Activated CD8-positive, alpha-beta T cell treated with anti-CD3 and anti-CD28 coated beads, Interleukin-2, amount 10 ng/mL, durations not matched to agents 7 days and 5 days (primary cell): ENCODE measurements at regions of chr14 and their contacts with region 1.

Region 1: DNA sequence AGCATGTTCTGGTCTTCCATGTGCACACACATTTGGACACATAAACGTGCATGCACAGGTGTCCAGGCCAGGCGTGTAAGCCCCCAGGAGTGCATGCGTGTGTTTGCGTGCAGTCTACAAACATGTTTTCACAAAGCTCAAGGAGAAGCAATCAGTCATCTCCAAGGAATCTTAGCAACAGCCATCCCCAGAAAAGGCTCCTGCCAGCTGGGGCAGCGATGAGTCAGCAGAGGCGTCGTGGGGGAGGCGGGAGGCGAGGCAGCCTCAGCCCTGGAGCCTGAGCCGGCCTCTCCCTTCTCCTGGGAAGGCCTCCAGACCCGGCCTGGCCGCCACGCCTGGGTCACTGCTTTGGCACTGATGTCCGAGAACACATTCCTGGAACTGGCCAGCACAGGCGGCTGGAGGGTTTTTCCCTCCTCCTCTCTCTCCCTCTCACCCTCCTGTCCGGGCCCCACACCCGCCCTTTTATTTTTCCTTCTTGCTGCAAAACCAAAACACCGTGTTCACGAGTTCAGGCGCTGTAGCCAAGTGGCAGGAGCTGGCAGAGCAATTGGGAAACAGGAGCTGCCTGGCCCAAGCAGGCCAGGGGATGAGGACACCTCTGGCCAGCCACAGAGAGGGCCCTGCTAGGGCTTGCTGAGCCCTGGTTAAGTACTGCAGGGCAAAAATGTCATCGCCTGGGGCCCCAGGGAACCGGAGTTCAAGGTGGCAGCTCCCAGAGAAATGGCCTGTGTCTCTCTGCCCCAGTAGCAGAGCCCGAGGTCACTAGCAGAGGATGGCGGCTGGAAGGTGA is 92.7 kb downstream of the LRRC74A start:
- DNase-seq: no peak
- ATAC-seq: no peak
- H3K4me3 Mint-ChIP-seq: no peak overlapping the region
- H3K27ac Mint-ChIP-seq: peak overlapping the region; percentile 81
- H3K4me1 Mint-ChIP-seq: peaks cover 72% of the 10 kb centered on the region
- H3K27me3 Mint-ChIP-seq: no peaks in the 10 kb centered on the region

Region 2: DNA sequence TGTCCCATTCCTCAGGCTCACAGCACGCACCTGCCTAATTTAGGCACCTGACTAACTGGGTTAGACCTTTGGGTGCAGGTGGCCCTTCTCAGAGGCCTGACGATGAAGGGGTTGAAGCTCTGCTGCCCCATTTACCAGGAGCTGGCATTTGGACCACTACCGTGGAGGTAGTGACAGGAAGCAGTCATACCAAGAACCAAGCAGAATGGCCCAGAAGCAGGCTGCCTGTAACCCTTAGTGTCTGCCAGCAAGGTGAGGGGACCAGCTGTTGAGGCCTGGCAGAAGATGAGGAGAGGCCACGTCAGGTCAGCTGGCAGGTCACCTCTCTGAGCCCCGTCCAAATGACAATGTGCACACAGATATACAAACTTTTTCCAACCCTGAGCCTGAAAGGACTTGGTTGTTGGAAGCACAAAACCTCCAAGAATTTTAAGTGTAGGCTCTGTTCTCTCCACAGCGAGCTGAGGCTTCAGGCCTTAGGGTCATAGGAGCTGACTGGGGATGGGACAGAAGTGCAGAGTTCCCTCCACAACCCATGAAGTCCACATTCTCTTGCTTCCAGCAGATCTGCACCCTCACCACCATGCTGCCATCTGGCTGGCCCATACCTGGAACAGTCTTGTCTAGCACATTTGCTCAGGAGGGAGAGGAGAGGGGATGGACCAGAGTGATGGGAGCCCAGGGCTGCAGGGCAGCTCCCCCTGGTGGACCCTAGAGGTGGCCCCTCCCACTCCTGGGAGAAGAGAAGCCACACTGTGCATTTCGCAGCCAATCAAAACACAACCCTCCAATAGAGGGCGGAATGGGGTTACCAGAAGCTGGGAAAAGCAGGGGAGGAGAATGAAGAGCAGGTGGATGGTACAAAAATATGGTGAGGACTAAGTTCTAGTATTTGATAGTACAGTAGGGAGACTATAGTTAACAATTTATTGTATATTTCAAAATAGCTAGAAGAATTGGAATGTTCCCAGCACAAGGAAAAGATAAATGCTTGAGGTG is 134.4 kb before region 1 on chr14:
- CTCF ChIA-PET with region 1: no interaction called
- POLR2A ChIA-PET with region 1: no interaction called
- DNase-seq: peak; percentile 68
- ATAC-seq: peak; percentile 81
- H3K4me3 Mint-ChIP-seq: no peak overlapping the region
- H3K27ac Mint-ChIP-seq: peak overlapping the region; percentile 12
- H3K4me1 Mint-ChIP-seq: peaks cover 50% of the 10 kb centered on the region
- H3K27me3 Mint-ChIP-seq: no peaks in the 10 kb centered on the region

Region 3: DNA sequence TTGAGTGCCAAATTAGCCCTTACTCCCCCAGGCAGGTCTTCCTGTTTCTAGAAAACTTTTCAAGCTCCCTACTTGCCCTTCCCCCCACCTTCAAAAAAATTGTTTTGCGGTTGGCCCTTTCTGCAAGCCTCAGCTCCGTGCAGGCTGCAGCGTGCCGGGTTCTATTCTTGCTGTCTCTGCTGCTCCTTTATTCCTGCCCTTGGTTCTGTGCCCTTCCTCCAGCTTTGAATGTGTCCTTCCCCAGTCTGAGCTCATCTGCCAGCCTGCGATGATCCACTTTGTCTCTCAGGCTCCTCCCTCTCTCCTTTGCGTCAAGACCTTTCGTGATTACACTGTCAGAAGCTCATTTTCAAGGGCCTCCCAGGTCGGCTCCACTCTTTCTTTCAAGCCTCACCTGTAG is 11.0 kb after region 1 on chr14:
- CTCF ChIA-PET with region 1: interaction called, 28 read pairs
- POLR2A ChIA-PET with region 1: interaction called, 6 read pairs
- DNase-seq: peak; percentile 82
- ATAC-seq: peak; percentile 70
- H3K4me3 Mint-ChIP-seq: peak overlapping the region; percentile 48
- H3K27ac Mint-ChIP-seq: peak overlapping the region; percentile 82
- H3K4me1 Mint-ChIP-seq: peaks cover 79% of the 10 kb centered on the region
- H3K27me3 Mint-ChIP-seq: no peaks in the 10 kb centered on the region

Region 4: GRCh38 chr14:76947078-76947837 is 28.3 kb after region 1 on chr14:
- CTCF ChIA-PET with region 1: interaction called, 23 read pairs
- POLR2A ChIA-PET with region 1: no interaction called
- DNase-seq: peak; percentile 86
- ATAC-seq: peak; percentile 95
- H3K4me3 Mint-ChIP-seq: peak overlapping the region; percentile 25
- H3K27ac Mint-ChIP-seq: peak overlapping the region; percentile 81
- H3K4me1 Mint-ChIP-seq: peaks cover 59% of the 10 kb centered on the region
- H3K27me3 Mint-ChIP-seq: no peaks in the 10 kb centered on the region

Region 5: GRCh38 chr14:76962303-76962660 is 43.3 kb after region 1 on chr14:
- CTCF ChIA-PET with region 1: interaction called, 33 read pairs
- POLR2A ChIA-PET with region 1: interaction called, 17 read pairs
- DNase-seq: no peak
- ATAC-seq: no peak
- H3K4me3 Mint-ChIP-seq: peak overlapping the region; percentile 79
- H3K27ac Mint-ChIP-seq: peak overlapping the region; percentile 98
- H3K4me1 Mint-ChIP-seq: peaks cover 89% of the 10 kb centered on the region
- H3K27me3 Mint-ChIP-seq: no peaks in the 10 kb centered on the region

Region 6: DNA sequence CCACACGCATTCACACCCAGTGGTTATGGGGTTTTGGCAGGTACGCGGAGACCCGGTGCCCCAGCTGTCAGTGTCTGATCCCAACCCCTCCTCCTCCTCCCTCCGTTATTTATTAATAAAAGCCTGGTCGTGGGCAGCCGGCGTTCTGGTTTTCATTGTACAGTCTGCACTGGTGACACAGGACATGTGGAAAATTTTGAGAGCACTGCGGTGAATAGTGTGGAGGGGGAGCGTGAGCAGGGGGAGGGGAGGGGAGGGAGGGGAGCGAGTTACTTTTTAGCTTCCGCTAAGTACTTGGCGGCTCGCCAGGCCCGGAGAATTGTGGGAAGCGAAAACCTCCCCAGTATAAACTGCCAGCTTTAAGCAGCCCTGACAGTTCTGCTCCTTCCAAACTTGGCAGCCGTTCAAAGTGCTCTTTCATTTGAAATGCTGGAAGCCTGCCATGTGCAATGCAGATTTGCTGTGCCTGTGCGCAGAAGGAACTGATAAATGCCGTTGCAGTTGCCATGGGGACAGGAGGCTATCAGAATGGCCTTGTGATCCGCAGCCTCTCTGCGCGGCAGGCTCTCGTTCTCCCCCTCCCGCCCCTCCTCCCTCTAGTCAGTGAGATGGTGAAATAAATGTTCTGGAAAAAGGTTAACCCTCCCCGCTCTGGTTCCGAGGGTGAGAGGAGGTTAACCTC is 121.3 kb after region 1 on chr14:
- CTCF ChIA-PET with region 1: interaction called, 31 read pairs
- POLR2A ChIA-PET with region 1: interaction called, 4 read pairs
- DNase-seq: peak; percentile 94
- ATAC-seq: peak; percentile 72
- H3K4me3 Mint-ChIP-seq: peak overlapping the region; percentile 76
- H3K27ac Mint-ChIP-seq: peak overlapping the region; percentile 97
- H3K4me1 Mint-ChIP-seq: peaks cover 89% of the 10 kb centered on the region
- H3K27me3 Mint-ChIP-seq: no peaks in the 10 kb centered on the region

Region 7: DNA sequence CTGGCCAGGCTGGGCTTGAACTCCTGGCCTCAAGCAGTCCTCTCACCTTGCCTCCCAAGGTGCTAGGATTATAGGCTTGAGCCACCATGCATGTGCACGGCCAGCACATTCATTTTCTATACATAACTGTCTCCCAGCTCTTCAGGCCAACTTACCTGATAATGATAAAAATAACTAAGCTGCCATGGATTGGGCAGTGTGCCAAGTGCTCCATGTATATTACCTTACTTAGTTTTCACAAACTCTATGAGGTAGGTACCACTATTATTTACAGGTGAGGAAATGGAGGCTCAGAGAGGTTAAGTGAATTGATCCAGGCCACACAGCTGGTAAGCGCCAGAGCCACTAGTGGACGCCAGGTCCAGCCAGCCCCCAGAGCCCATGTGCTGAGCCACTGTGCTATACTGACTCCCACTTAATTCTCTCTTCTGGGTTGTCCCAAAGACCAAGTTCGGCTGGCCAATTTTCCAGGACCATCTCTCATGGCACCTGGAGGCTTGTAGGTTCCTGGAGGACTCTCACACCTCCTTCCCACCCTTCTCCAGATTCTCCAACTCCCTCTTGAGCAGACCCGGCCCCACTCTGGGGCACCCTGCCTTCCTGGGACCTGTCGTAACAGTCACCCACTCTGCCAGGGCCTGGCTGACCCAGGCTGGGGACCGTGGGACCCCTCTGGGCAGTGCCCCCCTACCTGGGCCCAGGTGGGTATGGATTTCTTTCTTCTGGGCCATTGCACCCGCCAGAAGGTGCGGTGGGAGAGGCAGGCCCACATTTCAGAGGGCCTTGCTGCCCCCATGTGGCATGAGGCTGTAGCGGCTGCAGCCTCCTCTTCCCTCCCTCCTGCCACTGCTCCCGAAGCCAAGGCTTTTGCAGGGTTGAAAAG is 148.9 kb after region 1 on chr14:
- CTCF ChIA-PET with region 1: interaction called, 121 read pairs
- POLR2A ChIA-PET with region 1: no interaction called
- DNase-seq: peak; percentile 72
- ATAC-seq: peak; percentile 83
- H3K4me3 Mint-ChIP-seq: no peak overlapping the region
- H3K27ac Mint-ChIP-seq: no peak overlapping the region
- H3K4me1 Mint-ChIP-seq: peaks cover 9% of the 10 kb centered on the region
- H3K27me3 Mint-ChIP-seq: peaks cover 11% of the 10 kb centered on the region